GM12878 (cell line): ENCODE measurements at regions of chr10 and their contacts with region 1.

Region 1: GRCh38 chr10:11165591-11166543 is 148.2 kb downstream of the CELF2 start:
- DNase-seq: no peak
- ATAC-seq: peak; percentile 69
- H3K4me3 ChIP-seq: peak overlapping the region; percentile 96
- H3K27ac ChIP-seq: peak overlapping the region; percentile 95
- H3K4me1 ChIP-seq: peaks cover 21% of the 10 kb centered on the region
- H3K27me3 ChIP-seq: no peaks in the 10 kb centered on the region
- CTCF ChIP-seq: peak; percentile 66 to 89 (median 72)
- EP300 ChIP-seq: no peak
- POLR2A ChIP-seq: peak; percentile 54; the same call in 1 of the 2 replicates
- RAD21 ChIP-seq: peak; percentile 68

Region 2: GRCh38 chr10:9508606-9509005 is 1657.3 kb before region 1 on chr10:
- CTCF ChIA-PET with region 1: no interaction called
- POLR2A ChIA-PET with region 1: no interaction called
- RAD21 ChIA-PET with region 1: no interaction called
- SMC1A ChIA-PET with region 1: no interaction called
- in situ Hi-C with region 1: no loop called
- intact Hi-C with region 1: no loop called
- DNase-seq: no peak
- ATAC-seq: no peak
- H3K4me3 ChIP-seq: no peak overlapping the region
- H3K27ac ChIP-seq: no peak overlapping the region
- H3K4me1 ChIP-seq: no peaks in the 10 kb centered on the region
- H3K27me3 ChIP-seq: no peaks in the 10 kb centered on the region
- CTCF ChIP-seq: no peak
- EP300 ChIP-seq: no peak
- POLR2A ChIP-seq: no peak
- RAD21 ChIP-seq: no peak

Region 3: DNA sequence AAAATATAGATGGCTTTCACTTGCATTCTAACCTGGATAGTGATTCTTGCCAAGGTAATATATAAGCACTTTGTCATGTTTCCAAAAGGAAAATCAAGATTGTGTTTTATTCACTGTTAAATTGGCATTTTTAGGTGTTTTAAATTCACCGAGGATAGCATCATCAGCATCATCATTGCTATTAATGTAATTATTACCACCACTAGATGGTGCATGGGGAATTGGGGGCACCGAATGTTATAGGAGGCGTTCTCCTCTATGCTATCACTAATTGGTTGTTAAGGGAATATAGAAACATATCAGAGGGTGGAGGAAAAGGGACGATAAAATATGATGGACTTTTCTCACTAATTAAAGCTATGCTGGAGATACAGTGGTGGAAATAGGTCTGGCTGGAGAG is 52.7 kb before region 1 on chr10:
- CTCF ChIA-PET with region 1: interaction called, 18 read pairs
- POLR2A ChIA-PET with region 1: no interaction called
- RAD21 ChIA-PET with region 1: interaction called, 31 read pairs
- SMC1A ChIA-PET with region 1: interaction called, 13 read pairs
- in situ Hi-C with region 1: no loop called
- intact Hi-C with region 1: loop called (anchors 1 kb)
- DNase-seq: peak; percentile 20
- ATAC-seq: peak; percentile 97
- H3K4me3 ChIP-seq: no peak overlapping the region
- H3K27ac ChIP-seq: no peak overlapping the region
- H3K4me1 ChIP-seq: no peaks in the 10 kb centered on the region
- H3K27me3 ChIP-seq: no peaks in the 10 kb centered on the region
- CTCF ChIP-seq: peak; percentile 58 to 70 (median 59); a peak in 5 of 6 replicates
- EP300 ChIP-seq: no peak
- POLR2A ChIP-seq: no peak
- RAD21 ChIP-seq: peak; percentile 81

Region 4: GRCh38 chr10:11209830-11210181 is 43.9 kb after region 1 on chr10:
- CTCF ChIA-PET with region 1: interaction called, 5 read pairs
- POLR2A ChIA-PET with region 1: interaction called, 11 read pairs
- RAD21 ChIA-PET with region 1: interaction called, 30 read pairs
- SMC1A ChIA-PET with region 1: interaction called, 28 read pairs
- in situ Hi-C with region 1: no loop called
- intact Hi-C with region 1: no loop called
- DNase-seq: no peak
- ATAC-seq: peak; percentile 35
- H3K4me3 ChIP-seq: peak overlapping the region; percentile 7
- H3K27ac ChIP-seq: peak overlapping the region; percentile 92
- H3K4me1 ChIP-seq: peaks cover 86% of the 10 kb centered on the region
- H3K27me3 ChIP-seq: no peaks in the 10 kb centered on the region
- CTCF ChIP-seq: no peak
- EP300 ChIP-seq: no peak; a peak in 1 of 4 replicates
- POLR2A ChIP-seq: no peak
- RAD21 ChIP-seq: no peak

Region 5: DNA sequence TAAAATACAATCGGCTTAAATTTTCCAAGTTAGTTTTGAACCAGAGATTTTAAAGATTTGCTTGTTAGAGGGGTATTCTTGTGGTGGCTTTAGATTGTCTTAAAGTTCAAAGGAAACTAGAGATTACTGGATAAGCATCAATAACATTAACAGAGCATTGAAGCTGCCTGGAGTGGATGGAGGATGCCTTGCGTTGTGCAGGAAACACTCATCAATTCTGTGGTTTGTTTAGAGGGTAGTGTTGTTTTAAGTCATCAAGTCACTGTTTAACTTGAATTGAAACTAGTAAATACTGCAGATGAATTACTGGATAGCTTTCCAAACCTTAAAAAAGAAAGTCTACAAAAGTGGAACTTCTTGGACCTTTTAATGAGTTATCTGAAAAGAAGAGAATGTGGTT is 70.4 kb after region 1 on chr10:
- CTCF ChIA-PET with region 1: interaction called, 6 read pairs
- POLR2A ChIA-PET with region 1: interaction called, 19 read pairs
- RAD21 ChIA-PET with region 1: interaction called, 81 read pairs
- SMC1A ChIA-PET with region 1: interaction called, 417 read pairs
- in situ Hi-C with region 1: no loop called
- intact Hi-C with region 1: no loop called
- DNase-seq: no peak
- ATAC-seq: peak; percentile 69
- H3K4me3 ChIP-seq: peak overlapping the region; percentile 36; the same call in 1 of the 2 replicates
- H3K27ac ChIP-seq: peak overlapping the region; percentile 74
- H3K4me1 ChIP-seq: peaks cover 71% of the 10 kb centered on the region
- H3K27me3 ChIP-seq: no peaks in the 10 kb centered on the region
- CTCF ChIP-seq: 0 out of 6 replicates have a peak, but pooled peaks of 1 of the 3 experiments have one; percentile 2
- EP300 ChIP-seq: peak in 1 of 2 experiments; percentile 63; a peak in 1 of 4 replicates
- POLR2A ChIP-seq: no peak
- RAD21 ChIP-seq: no peak

Region 6: DNA sequence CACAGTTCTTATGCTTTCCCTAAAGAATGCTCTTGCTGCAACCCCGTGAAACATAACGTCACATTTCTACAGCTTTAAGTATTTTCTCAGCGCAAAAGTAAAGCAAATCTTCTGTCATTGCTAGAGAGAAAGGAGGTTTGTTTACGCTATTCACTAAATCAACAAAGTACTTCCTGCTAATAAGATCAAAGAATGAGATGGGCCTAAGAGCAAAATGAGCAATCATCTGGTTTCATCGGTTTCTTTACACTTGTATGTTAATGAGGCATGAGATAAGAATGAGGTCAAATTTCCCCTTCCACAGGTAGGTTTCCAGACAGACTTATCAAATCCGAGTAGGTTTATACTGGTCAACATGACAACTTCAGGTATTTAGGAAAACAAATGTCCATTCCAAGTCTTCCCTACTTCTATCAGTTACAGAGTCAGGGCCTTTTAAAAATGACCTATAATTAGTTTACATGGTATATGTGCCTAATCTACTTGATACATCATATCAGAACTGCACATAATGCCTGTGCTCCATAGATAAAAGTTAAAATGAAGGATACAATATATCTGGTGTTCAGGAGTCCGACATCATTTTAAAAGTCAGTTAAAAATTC is 437.2 kb after region 1 on chr10:
- CTCF ChIA-PET with region 1: no interaction called
- POLR2A ChIA-PET with region 1: no interaction called
- RAD21 ChIA-PET with region 1: no interaction called
- SMC1A ChIA-PET with region 1: interaction called, 3 read pairs
- in situ Hi-C with region 1: no loop called
- intact Hi-C with region 1: loop called (anchors 10 kb)
- DNase-seq: peak; percentile 67
- ATAC-seq: peak; percentile 62
- H3K4me3 ChIP-seq: peak overlapping the region; percentile 54
- H3K27ac ChIP-seq: peak overlapping the region; percentile 64
- H3K4me1 ChIP-seq: peaks cover 45% of the 10 kb centered on the region
- H3K27me3 ChIP-seq: no peaks in the 10 kb centered on the region
- CTCF ChIP-seq: no peak
- EP300 ChIP-seq: peak; percentile 51 to 59; a peak in 2 of 4 replicates
- POLR2A ChIP-seq: no peak
- RAD21 ChIP-seq: no peak